ENCODE measurements at regions of chr16 and their contacts with region 1.

Region 1: GRCh38 chr16:67372664-67373063 is 20.6 kb downstream of the TPPP3 start:
- DNase-seq: no peak
- H3K4me3 ChIP-seq: no peak overlapping the region
- H3K27ac ChIP-seq: no peak overlapping the region
- H3K4me1 ChIP-seq: peaks cover 6% of the 10 kb centered on the region; the same call in 1 of the 2 replicates
- H3K27me3 ChIP-seq: peaks cover 23% of the 10 kb centered on the region
- CTCF ChIP-seq: peak; percentile 65

Region 2: DNA sequence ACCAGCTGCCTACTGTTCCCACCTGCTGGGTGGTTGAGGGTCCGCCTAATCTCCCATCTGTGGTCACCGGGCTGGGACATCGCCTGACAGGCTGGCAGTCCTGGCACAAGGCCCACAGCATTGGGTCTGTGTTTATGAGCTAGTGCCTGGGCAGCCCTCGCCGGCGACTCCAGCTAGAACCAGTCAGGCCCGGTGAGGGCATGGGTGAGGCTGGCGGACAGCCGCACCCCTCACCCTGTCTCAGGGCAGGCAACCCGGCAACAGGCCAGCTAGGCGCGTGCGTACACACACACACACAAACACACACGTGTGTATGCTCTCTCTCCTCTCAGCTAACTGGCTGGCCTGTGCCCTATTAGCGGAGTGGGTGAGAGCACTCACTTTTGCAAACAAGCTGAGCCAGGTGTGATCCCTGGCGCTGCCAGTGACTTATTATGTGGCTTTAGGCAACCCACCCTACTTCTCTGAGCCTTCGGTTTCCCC is 68.6 kb after region 1 on chr16:
- CTCF ChIA-PET with region 1: interaction called, 15 read pairs
- POLR2A ChIA-PET with region 1: no interaction called
- intact Hi-C with region 1: no loop called
- DNase-seq: peak; percentile 8 to 70
- H3K4me3 ChIP-seq: no peak overlapping the region
- H3K27ac ChIP-seq: no peak overlapping the region
- H3K4me1 ChIP-seq: no peaks in the 10 kb centered on the region
- H3K27me3 ChIP-seq: no peaks in the 10 kb centered on the region
- CTCF ChIP-seq: no peak

Region 3: GRCh38 chr16:67470359-67470758 is 97.7 kb after region 1 on chr16:
- CTCF ChIA-PET with region 1: no interaction called
- POLR2A ChIA-PET with region 1: no interaction called
- intact Hi-C with region 1: loop called (anchors 5 kb)
- DNase-seq: no peak
- H3K4me3 ChIP-seq: no peak overlapping the region
- H3K27ac ChIP-seq: no peak overlapping the region
- H3K4me1 ChIP-seq: 0 out of 2 replicates have a peak, but pooled peaks cover 4% of the 10 kb centered on the region
- H3K27me3 ChIP-seq: no peaks in the 10 kb centered on the region
- CTCF ChIP-seq: no peak

Region 4: GRCh38 chr16:67660564-67661028 is 287.9 kb after region 1 on chr16 and contains the start of gene PARD6A:
- CTCF ChIA-PET with region 1: no interaction called
- POLR2A ChIA-PET with region 1: no interaction called
- intact Hi-C with region 1: no loop called
- DNase-seq: peak; percentile 79 to 87
- H3K4me3 ChIP-seq: peak within 1 kb of the TSS; percentile 97
- H3K27ac ChIP-seq: peak within 1 kb of the TSS; percentile 52
- H3K4me1 ChIP-seq: peaks cover 7% of the 10 kb centered on the region
- H3K27me3 ChIP-seq: no peaks in the 10 kb centered on the region
- CTCF ChIP-seq: no peak
- total RNA-seq, gene PARD6A: 4.4 and 8.1 TPM in 2 replicates

Region 5: DNA sequence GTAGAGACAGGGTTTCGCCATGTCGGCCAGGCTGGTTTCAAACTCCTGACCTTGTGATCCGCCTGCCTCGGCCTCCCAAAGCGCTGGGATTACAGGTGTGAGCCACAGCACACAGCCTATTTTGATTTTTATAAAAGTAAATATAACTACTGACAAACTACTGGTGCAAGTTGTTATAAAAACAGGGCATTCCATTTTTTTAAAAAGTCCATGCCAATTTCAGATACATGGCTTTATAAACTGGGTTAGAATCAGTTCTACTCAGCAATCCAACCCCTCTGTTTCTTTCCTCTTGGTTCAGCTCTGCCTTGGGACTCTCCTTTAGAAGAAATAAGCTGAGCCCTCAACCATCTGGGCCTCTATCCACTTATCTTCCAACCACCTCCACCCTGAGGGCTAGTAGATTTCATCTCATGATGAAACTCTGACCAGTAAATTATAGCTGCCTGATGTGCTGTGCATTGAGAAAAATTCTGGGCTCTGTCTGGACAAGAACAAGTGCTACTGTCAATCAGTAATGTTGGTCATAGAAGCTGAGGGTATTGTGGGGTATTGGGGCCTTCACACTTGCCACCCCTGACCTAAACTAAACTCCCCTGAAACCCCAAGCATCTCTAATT is 423.5 kb after region 1 on chr16:
- CTCF ChIA-PET with region 1: no interaction called
- POLR2A ChIA-PET with region 1: no interaction called
- intact Hi-C with region 1: no loop called
- DNase-seq: no peak
- H3K4me3 ChIP-seq: no peak overlapping the region
- H3K27ac ChIP-seq: no peak overlapping the region
- H3K4me1 ChIP-seq: no peaks in the 10 kb centered on the region
- H3K27me3 ChIP-seq: no peaks in the 10 kb centered on the region
- CTCF ChIP-seq: no peak